CD8-positive, alpha-beta memory T cell (primary cell): ENCODE measurements at regions of chr14 and their contacts with region 1.

Region 1: DNA sequence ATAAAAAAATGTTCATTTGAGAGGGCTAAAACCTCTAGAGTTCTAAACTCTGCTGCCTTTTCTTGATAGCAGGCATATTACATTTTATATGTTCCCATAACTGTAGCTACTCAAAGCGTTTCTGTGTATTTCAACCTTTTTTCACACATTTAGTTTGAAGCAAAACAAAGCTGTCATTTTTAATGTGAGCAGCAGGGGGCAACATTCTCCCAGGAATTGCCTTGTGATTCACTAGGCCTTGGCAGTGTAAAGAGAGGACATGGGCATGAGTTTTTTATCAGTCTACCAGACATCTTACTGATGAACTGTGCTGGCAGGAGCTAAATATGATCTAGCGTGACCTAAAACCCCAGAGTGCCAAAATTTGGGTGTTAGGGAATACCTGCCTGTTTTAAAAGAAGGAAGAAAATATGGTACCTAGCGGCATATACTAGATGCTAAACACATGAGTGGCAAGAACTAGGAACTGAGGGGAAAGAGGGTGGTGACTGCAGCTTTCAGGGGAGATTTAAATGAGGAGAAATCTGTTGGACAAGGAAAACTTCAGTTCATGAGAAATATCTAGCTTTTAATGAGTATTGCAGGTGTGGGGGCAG is 65.3 kb downstream of the IFT43 start:
- DNase-seq: peak in 4 of 5 donors; percentile 11 to 40 (median 33)
- H3K4me3 ChIP-seq: no peak overlapping the region
- H3K4me3 Mint-ChIP-seq: no peak overlapping the region
- H3K27ac ChIP-seq: no peak overlapping the region
- H3K27ac Mint-ChIP-seq: no peak overlapping the region
- H3K4me1 ChIP-seq: no peaks in the 10 kb centered on the region
- H3K4me1 Mint-ChIP-seq: peaks cover 0 to 4% (median 0%) of the 10 kb centered on the region in 3 donors
- H3K27me3 ChIP-seq: no peaks in the 10 kb centered on the region
- H3K27me3 Mint-ChIP-seq: no peaks in the 10 kb centered on the region

Region 2: GRCh38 chr14:75968456-75968855 is 82.4 kb before region 1 on chr14:
- CTCF ChIA-PET with region 1: no interaction called
- POLR2A ChIA-PET with region 1: no interaction called
- DNase-seq: no peak
- H3K4me3 ChIP-seq: no peak overlapping the region
- H3K4me3 Mint-ChIP-seq: no peak overlapping the region
- H3K27ac ChIP-seq: no peak overlapping the region
- H3K27ac Mint-ChIP-seq: no peak overlapping the region
- H3K4me1 ChIP-seq: no peaks in the 10 kb centered on the region
- H3K4me1 Mint-ChIP-seq: no peaks in the 10 kb centered on the region
- H3K27me3 ChIP-seq: no peaks in the 10 kb centered on the region
- H3K27me3 Mint-ChIP-seq: no peaks in the 10 kb centered on the region

Region 3: GRCh38 chr14:75982266-75983018 is 68.5 kb before region 1 on chr14:
- CTCF ChIA-PET with region 1: no interaction called
- POLR2A ChIA-PET with region 1: no interaction called
- DNase-seq: peak; percentile 66 to 85 (median 75)
- H3K4me3 ChIP-seq: peak overlapping the region; percentile 67
- H3K4me3 Mint-ChIP-seq: peak overlapping the region; percentile 83 to 95 (median 86)
- H3K27ac ChIP-seq: peak overlapping the region; percentile 65
- H3K27ac Mint-ChIP-seq: peak overlapping the region; percentile 77 to 97 (median 87)
- H3K4me1 ChIP-seq: peaks cover 26% of the 10 kb centered on the region
- H3K4me1 Mint-ChIP-seq: peaks cover 42 to 67% (median 55%) of the 10 kb centered on the region in 3 donors
- H3K27me3 ChIP-seq: no peaks in the 10 kb centered on the region
- H3K27me3 Mint-ChIP-seq: peaks cover 0 to 5% of the 10 kb centered on the region in 2 donors

Region 4: GRCh38 chr14:76352639-76353281 is 301.9 kb after region 1 on chr14:
- CTCF ChIA-PET with region 1: interaction called, 31 read pairs
- POLR2A ChIA-PET with region 1: no interaction called
- DNase-seq: peak in 4 of 5 donors; percentile 6 to 22 (median 10)
- H3K4me3 ChIP-seq: no peak overlapping the region
- H3K4me3 Mint-ChIP-seq: peak overlapping the region in 2 of 7 donors; percentile 28 to 36
- H3K27ac ChIP-seq: no peak overlapping the region
- H3K27ac Mint-ChIP-seq: no peak overlapping the region
- H3K4me1 ChIP-seq: no peaks in the 10 kb centered on the region
- H3K4me1 Mint-ChIP-seq: peaks cover 1 to 6% (median 6%) of the 10 kb centered on the region in 3 donors
- H3K27me3 ChIP-seq: no peaks in the 10 kb centered on the region
- H3K27me3 Mint-ChIP-seq: peaks cover 30 to 60% of the 10 kb centered on the region in 2 donors

Region 5: GRCh38 chr14:76386915-76387782 is 336.3 kb after region 1 on chr14:
- CTCF ChIA-PET with region 1: interaction called, 11 read pairs
- POLR2A ChIA-PET with region 1: no interaction called
- DNase-seq: peak; percentile 17 to 56 (median 31)
- H3K4me3 ChIP-seq: no peak overlapping the region
- H3K4me3 Mint-ChIP-seq: no peak overlapping the region
- H3K27ac ChIP-seq: no peak overlapping the region
- H3K27ac Mint-ChIP-seq: no peak overlapping the region
- H3K4me1 ChIP-seq: no peaks in the 10 kb centered on the region
- H3K4me1 Mint-ChIP-seq: no peaks in the 10 kb centered on the region
- H3K27me3 ChIP-seq: peaks cover 4% of the 10 kb centered on the region
- H3K27me3 Mint-ChIP-seq: peaks cover 9 to 65% of the 10 kb centered on the region in 2 donors